ENCODE measurements at regions of chr1 and their contacts with region 1.

Region 1: DNA sequence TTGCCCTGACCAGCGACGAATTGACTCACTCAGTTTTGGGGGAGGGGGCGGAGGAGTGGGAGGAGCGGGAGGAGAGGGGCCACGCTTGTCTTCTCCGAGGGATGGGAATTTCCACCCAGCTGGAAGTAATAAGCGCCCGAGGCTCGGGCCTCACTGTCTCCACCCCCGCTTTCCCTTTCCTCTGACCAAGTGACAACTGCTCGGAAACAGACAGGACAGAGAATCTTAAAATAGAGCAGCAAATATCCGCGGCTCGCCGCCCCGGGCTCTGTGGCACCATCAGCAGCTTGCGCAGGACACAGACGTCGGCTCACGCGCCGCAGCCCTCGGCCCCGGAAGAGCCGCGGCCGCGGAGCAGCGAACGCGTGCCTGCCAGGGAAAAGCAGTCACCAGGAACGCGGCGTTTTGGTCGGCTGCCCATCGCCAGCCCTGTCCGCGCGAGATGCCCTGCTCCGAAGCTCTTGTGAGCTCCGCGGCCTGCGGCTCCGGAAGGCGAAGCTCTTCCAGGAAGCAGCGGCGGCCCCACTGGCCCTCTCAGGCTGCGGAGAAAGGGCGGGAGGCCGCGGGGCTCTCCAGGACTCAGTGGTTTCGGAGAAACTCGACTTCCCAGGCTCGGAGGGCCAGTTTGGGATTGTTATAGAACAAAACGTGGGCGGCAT is 10.7 kb upstream of the RGS16 start:
- DNase-seq: peak; percentile 58
- ATAC-seq: peak; percentile 75
- H3K4me3 Mint-ChIP-seq: peak overlapping the region; percentile 87
- H3K27ac Mint-ChIP-seq: peak overlapping the region; percentile 81
- H3K4me1 Mint-ChIP-seq: peaks cover 43% of the 10 kb centered on the region
- H3K27me3 Mint-ChIP-seq: peaks cover 11% of the 10 kb centered on the region
- CTCF ChIP-seq: no peak

Region 2: GRCh38 chr1:182520736-182521135 is 94.2 kb before region 1 on chr1:
- CTCF ChIA-PET with region 1: no interaction called
- POLR2A ChIA-PET with region 1: no interaction called
- intact Hi-C with region 1: no loop called
- DNase-seq: no peak
- ATAC-seq: no peak
- H3K4me3 Mint-ChIP-seq: no peak overlapping the region
- H3K27ac Mint-ChIP-seq: no peak overlapping the region
- H3K4me1 Mint-ChIP-seq: no peaks in the 10 kb centered on the region
- H3K27me3 Mint-ChIP-seq: peaks cover 10% of the 10 kb centered on the region
- CTCF ChIP-seq: no peak

Region 3: DNA sequence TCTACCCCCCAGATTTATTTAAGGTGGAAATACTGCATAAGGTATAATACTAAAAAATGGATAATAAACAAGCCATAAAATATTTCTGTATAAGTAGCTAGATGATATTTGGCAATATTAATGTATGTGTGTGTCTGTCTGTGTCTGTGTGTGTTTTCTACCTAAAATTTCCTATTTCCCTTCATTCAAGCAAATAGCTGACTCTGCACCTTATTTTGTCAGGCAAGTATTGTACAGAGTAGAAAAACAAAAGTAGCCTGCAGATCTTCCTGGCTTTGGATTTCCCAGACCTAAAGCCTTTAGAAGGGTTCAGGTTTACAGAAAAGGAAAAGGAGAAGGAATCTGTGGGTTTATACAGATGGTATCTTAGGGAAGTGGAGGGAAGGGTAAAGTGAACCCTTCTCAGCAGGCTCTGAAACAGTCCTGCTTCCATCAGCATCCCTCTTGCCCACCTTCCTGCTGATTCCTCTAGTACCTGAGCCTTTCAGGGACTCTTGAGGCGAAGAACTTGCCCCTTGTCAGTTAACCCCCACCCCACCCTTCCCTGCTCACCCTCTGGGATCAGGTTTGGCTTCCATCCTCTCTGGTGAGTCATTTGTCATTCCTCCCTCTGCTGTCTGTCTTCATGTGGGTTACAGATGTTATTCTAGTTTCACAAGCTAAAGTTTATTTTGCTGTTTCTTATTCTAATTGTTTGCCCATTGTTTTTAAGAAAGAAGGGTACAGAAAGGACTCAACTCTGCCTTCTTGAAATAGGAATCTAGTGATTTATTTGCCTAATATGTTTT is 11.0 kb after region 1 on chr1:
- CTCF ChIA-PET with region 1: no interaction called
- POLR2A ChIA-PET with region 1: interaction called, 13 read pairs
- intact Hi-C with region 1: loop called (anchors 1 kb)
- DNase-seq: no peak
- ATAC-seq: no peak
- H3K4me3 Mint-ChIP-seq: no peak overlapping the region
- H3K27ac Mint-ChIP-seq: no peak overlapping the region
- H3K4me1 Mint-ChIP-seq: peaks cover 57% of the 10 kb centered on the region
- H3K27me3 Mint-ChIP-seq: no peaks in the 10 kb centered on the region
- CTCF ChIP-seq: no peak

Region 4: DNA sequence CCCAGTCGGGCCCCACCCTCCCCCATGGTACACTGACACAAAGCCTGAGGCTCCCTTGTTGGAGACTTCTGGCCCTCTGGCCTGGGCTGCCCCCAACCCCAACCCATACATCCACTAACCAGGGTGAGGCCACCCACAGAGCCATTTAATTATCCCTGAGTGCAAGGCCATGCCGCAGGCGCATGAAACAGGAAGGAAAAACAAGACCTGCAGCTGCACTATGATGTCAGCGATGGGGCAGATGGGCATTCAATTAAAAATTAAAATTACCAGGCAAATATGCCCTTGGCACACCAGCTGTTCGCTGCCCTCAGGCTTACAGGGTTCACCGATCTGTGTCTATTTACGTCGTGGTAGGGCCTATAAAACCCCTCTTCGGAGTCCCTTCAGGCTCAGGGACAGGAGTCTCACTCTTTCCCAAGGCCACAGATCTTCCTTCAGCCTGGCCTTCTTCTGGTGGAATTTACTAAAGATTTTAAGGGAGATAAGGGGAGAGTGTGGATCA is 18.8 kb after region 1 on chr1:
- CTCF ChIA-PET with region 1: no interaction called
- POLR2A ChIA-PET with region 1: interaction called, 7 read pairs
- intact Hi-C with region 1: loop called (anchors 2 kb)
- DNase-seq: peak; percentile 24
- ATAC-seq: peak; percentile 61
- H3K4me3 Mint-ChIP-seq: peak overlapping the region; percentile 17
- H3K27ac Mint-ChIP-seq: peak overlapping the region; percentile 51
- H3K4me1 Mint-ChIP-seq: peaks cover 52% of the 10 kb centered on the region
- H3K27me3 Mint-ChIP-seq: no peaks in the 10 kb centered on the region
- CTCF ChIP-seq: no peak

Region 5: DNA sequence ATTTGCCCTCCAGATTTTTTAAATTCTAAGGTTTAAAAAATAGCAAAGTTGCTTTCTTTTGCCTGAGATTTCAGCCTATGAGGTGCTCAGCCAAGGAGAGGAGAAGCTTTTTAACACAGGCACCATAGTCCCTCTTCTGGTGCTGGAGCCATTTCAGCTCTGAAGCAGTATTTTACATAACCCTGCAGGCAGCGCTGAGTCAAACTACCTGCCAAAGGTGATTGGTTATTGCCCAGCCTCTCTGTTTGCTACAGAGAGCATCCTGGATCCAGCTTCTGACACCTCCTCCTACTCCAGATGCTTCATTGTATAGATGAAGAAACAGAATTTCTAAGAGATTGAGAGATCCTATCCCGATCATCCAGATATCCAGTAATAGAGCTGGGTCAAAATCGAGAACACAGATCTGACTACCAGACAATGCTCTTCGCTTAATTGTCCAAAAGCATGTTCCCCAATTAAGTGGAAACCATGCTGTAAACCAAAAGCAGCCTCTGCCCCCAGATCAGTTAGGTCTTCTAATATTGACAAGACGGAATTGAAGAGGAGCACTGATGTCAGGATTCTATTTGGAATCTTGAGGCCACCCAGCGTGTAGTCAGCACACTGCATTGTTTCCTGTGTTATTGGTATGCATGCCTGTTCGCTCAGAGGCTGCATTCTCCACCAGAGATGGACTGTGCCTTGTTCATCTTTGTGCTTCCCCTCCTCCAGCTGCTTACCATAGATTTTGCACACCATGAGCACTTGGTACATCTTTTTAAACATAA is 47.4 kb after region 1 on chr1:
- CTCF ChIA-PET with region 1: no interaction called
- POLR2A ChIA-PET with region 1: no interaction called
- intact Hi-C with region 1: no loop called
- DNase-seq: no peak
- ATAC-seq: no peak
- H3K4me3 Mint-ChIP-seq: no peak overlapping the region
- H3K27ac Mint-ChIP-seq: no peak overlapping the region
- H3K4me1 Mint-ChIP-seq: no peaks in the 10 kb centered on the region
- H3K27me3 Mint-ChIP-seq: peaks cover 3% of the 10 kb centered on the region
- CTCF ChIP-seq: no peak